Activated T-helper 1 cell treated with anti-CD3 and anti-CD28 coated beads, Interleukin-12 subunit alpha, Interleukin-12 subunit beta, Interleukin-2, Interleukin-4 antibody, amounts not matched to agents 30 ng/mL and 10 ng/mL and 1 ng/mL, durations not matched to agents 14 hours and 24 hours and 36 hours (primary cell): ENCODE measurements at regions of chr11 and their contacts with region 1.

Region 1: GRCh38 chr11:57667736-57668435 is at the start of gene ZDHHC5:
- DNase-seq: peak; percentile 99
- H3K4me3 Mint-ChIP-seq: peak within 1 kb of the TSS; percentile 99
- H3K27ac Mint-ChIP-seq: peak within 1 kb of the TSS; percentile 97
- H3K4me1 Mint-ChIP-seq: peaks cover 31% of the 10 kb centered on the region
- H3K27me3 Mint-ChIP-seq: no peaks in the 10 kb centered on the region
- total RNA-seq, gene ZDHHC5: 78.4 and 79.1 TPM in 2 replicates

Region 2: DNA sequence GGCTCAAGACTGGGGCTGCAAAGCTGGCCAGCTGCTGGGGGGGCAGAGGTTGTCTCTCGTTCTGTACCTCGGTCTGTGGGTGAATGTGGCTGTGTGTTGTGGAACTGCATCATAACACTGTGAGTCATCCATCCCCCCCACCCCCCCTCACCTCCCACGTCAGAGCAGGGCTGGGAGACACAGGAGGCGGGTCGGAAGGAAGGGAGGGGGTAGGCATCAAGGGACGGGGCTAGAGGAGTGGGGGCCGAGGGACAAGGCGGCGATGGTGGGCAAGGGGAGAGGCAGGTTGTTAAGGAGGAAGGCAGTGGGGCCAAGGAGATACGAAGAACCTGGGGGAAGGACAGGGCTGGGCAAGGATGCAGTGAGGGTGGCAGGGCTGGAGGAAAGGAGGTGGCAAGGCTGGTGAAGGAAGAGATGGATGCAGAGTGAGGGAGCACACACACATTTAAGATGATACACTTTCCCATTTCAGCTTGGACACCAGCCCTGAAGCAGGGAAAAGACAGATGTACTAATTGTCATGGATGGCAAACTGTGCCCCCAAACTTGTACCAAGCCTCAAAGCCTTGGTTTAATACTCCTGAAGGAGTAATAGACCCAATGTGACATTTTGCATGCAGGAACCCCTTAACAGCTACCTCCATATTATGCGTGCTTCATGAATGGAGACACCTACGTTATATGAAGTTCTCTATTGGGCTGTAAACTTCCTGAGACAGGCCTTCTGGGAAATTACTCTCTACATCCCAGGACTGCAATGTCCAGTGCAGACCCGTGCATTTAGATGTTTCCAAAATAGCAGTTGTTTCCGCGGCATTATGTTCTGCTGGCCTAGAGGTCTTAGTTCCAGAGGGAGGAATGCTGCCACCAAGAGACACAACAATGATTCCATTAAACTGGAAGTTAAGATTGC is 17.8 kb before region 1 on chr11 and contains the start of gene YPEL4:
- intact Hi-C with region 1: loop called (anchors 1 kb)
- DNase-seq: peak; percentile 49
- H3K4me3 Mint-ChIP-seq: peak within 1 kb of the TSS; percentile 86
- H3K27ac Mint-ChIP-seq: peak within 1 kb of the TSS; percentile 55
- H3K4me1 Mint-ChIP-seq: peaks cover 41% of the 10 kb centered on the region
- H3K27me3 Mint-ChIP-seq: peaks cover 31% of the 10 kb centered on the region
- total RNA-seq, gene YPEL4: 0.26 and 0.39 TPM in 2 replicates

Region 3: GRCh38 chr11:57657194-57658022 is 10.5 kb before region 1 on chr11 and contains the start of gene CLP1:
- intact Hi-C with region 1: loop called (anchors 1 kb)
- DNase-seq: peak; percentile 99
- H3K4me3 Mint-ChIP-seq: peak within 1 kb of the TSS; percentile 96
- H3K27ac Mint-ChIP-seq: peak within 1 kb of the TSS; percentile 95
- H3K4me1 Mint-ChIP-seq: peaks cover 18% of the 10 kb centered on the region
- H3K27me3 Mint-ChIP-seq: no peaks in the 10 kb centered on the region
- total RNA-seq, gene CLP1: 17.8 and 19.1 TPM in 2 replicates

Region 4: DNA sequence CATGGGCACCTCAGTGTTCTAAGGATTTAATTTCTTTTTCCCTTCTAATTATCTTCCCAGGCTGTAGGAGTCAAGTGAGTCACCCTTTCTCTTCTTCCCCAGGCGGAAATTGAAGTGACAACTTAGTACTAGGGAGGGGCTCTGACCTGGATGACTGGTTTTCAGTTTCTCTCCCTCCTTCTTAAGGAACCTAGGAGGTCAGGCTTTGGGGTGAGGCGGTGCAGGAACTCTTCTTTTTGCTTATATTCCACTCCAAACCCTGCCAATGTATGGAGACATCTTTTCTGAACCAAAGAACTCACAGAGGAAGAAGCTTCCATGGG is 12.6 kb after region 1 on chr11:
- intact Hi-C with region 1: loop called (anchors 1 kb)
- DNase-seq: no peak
- H3K4me3 Mint-ChIP-seq: no peak overlapping the region
- H3K27ac Mint-ChIP-seq: peak overlapping the region; percentile 73
- H3K4me1 Mint-ChIP-seq: peaks cover 36% of the 10 kb centered on the region
- H3K27me3 Mint-ChIP-seq: no peaks in the 10 kb centered on the region

Region 5: GRCh38 chr11:57800444-57801182 is 132.7 kb after region 1 on chr11:
- intact Hi-C with region 1: loop called (anchors 1 kb)
- DNase-seq: peak; percentile 13
- H3K4me3 Mint-ChIP-seq: no peak overlapping the region
- H3K27ac Mint-ChIP-seq: peak overlapping the region; percentile 26
- H3K4me1 Mint-ChIP-seq: peaks cover 23% of the 10 kb centered on the region
- H3K27me3 Mint-ChIP-seq: no peaks in the 10 kb centered on the region

Region 6: DNA sequence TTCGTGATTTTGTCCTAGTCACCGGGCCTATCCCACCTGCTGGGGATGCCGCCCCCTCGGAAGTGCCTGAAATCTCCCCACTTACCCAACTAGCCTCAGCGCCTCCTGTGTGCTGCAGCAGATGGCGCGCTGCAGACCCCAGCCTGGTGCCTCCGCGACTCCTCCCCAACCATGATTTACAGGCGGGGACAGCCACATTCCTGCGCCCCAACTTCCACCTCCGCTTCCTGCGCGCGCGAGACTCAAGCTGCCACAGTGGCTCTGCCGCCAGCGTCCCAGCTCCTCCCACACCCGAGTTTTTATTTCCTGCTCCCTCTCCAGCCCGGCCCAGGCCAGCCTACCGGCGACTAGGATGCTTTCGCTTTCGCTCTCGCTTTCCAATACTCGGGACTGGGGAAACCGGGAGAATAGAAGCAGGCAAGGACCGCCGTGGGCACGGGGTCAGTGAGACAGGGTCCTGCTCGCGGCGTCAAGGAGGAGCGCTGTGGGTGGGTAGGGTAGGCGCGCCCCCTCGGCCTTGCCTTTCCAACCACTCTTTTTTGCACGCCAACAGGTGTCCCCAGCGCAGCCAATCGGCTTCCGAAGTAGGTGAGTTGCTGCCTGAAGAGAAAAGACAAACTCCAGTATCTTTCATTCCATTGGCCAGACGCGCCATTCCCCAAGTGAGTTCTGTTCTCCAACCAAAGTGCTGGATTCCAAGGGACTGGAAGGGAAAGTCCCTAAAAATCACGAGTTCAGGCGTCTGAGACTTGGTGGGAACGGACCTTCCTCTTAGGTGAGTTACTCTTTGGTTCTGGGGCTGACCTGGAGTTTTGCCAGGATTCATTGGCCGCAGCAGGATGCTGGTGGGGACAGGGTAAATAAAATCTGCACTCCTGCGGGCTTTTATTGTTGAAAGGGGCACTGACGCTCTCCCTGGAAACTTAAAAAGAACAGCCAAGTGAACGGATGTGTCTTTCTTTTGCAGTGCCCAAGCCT is 1474.9 kb after region 1 on chr11 and contains the start of gene FAM111A:
- intact Hi-C with region 1: loop called (anchors 10 kb)
- DNase-seq: peak; percentile 88
- H3K4me3 Mint-ChIP-seq: peak within 1 kb of the TSS; percentile 91
- H3K27ac Mint-ChIP-seq: peak within 1 kb of the TSS; percentile 93
- H3K4me1 Mint-ChIP-seq: peaks cover 62% of the 10 kb centered on the region
- H3K27me3 Mint-ChIP-seq: no peaks in the 10 kb centered on the region
- total RNA-seq, gene FAM111A: 64.8 and 66.4 TPM in 2 replicates